Breast epithelium (tissue), 4 donors: ENCODE measurements at regions of chr14 and their contacts with region 1.

Region 1: DNA sequence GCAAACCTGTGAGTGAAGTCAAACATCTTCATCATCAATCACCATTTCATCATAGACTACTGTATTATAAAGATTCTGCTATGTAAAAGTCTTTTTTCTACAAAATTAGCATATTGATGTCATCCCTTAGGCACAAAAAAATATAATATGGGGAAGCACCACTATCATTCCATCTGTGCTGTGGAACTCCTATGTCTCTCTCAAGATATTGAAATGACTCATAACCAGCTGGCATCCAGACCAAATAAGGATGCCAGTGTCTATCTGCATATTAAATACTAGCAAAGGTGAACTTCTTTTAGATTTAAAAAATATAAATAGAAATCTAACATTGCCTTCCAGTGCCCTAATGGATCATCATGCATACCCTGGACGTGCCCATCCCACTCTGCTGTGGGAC is 17.9 kb upstream of the DCAF5 start:
- DNase-seq: no peak
- H3K4me3 ChIP-seq: no peak overlapping the region
- H3K27ac ChIP-seq: no peak overlapping the region
- H3K4me1 ChIP-seq: no peaks in the 10 kb centered on the region
- H3K27me3 ChIP-seq: no peaks in the 10 kb centered on the region
- CTCF ChIP-seq: no peak
- POLR2A ChIP-seq: no peak

Region 2: DNA sequence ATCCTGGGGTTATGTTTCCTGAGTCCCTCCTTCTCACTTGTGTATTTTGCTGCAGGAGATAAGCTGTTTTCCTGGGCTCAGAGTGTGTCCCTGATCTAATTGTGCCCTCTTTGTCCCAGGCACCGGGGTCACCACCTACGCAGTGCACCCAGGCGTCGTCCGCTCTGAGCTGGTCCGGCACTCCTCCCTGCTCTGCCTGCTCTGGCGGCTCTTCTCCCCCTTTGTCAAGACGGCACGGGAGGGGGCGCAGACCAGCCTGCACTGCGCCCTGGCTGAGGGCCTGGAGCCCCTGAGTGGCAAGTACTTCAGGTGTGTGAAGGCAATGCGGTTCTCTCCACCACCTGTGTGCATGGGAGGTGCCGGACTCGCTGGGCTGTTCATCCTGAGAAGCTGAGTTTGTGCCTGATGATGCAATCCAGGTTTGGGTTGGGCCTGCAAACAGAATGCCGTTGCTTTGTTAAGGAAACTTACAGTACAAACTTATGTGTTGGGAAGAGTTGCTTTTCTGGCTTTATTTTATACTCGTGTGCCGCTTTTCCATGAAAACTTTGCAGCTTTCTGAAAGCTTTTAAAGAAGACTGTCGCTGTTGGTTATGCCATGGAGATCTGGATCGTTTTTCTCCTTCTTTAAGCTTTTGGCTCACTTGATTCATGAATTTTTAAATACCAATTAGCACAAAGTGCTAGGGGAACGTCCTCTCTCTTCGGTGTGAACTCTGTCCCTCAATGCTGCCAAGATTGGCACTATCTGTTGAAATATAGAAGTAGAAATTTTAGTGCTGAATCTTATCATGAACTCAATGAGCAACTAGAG is 1441.6 kb before region 1 on chr14:
- intact Hi-C with region 1: loop called (anchors 5 kb)
- DNase-seq: no peak
- H3K4me3 ChIP-seq: no peak overlapping the region
- H3K27ac ChIP-seq: no peak overlapping the region
- H3K4me1 ChIP-seq: no peaks in the 10 kb centered on the region
- H3K27me3 ChIP-seq: no peaks in the 10 kb centered on the region
- CTCF ChIP-seq: no peak
- POLR2A ChIP-seq: no peak

Region 3: DNA sequence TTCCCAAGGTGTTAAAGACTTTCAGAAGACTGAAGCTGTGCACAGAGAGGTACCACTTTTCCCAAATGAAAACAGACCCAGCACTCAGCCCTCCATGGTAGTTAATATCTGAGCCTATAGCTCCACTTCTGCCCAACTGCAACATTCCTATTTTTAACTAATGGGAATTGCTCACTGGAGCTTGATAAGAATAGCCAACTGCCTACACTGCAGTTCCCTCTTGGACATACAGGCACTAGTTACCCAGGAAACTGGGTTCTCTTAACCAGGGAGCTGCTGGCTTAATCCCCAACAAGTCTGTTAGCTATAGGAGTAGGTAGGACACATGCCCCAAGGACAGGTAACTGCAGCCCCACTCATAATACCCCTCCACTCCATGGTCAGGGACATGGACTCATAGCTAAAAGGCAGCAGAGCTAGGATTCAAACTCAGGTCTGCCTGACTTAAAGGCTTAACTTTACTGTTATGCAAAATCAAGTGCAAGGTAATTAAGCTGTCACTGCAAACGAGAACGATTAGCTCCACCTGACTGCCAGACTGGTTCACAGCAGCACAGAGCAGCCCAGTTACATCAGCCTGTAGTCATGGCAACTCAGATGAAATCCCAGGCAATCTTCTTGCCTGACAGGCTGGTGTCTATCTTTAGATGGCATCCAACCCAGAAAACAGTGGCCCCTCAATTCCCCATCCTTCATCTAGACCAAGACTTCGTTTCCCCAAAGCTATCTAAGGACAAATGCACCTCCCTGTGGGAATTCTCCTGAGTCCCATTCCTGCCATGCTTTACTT is 114.6 kb before region 1 on chr14:
- intact Hi-C with region 1: no loop called
- DNase-seq: no peak
- H3K4me3 ChIP-seq: no peak overlapping the region
- H3K27ac ChIP-seq: no peak overlapping the region
- H3K4me1 ChIP-seq: peaks cover 0 to 7% of the 10 kb centered on the region in 2 donors
- H3K27me3 ChIP-seq: no peaks in the 10 kb centered on the region
- CTCF ChIP-seq: no peak
- POLR2A ChIP-seq: no peak